Heart right ventricle (tissue), 16 donors: ENCODE measurements at regions of chr5 and their contacts with region 1.

Region 1: GRCh38 chr5:44312374-44312773 is 76.8 kb downstream of the FGF10 start:
- DNase-seq: no peak
- ATAC-seq: no peak
- H3K4me3 ChIP-seq: no peak overlapping the region
- H3K27ac ChIP-seq: no peak overlapping the region
- H3K4me1 ChIP-seq: no peaks in the 10 kb centered on the region
- H3K27me3 ChIP-seq: no peaks in the 10 kb centered on the region
- CTCF ChIP-seq: no peak

Region 2: DNA sequence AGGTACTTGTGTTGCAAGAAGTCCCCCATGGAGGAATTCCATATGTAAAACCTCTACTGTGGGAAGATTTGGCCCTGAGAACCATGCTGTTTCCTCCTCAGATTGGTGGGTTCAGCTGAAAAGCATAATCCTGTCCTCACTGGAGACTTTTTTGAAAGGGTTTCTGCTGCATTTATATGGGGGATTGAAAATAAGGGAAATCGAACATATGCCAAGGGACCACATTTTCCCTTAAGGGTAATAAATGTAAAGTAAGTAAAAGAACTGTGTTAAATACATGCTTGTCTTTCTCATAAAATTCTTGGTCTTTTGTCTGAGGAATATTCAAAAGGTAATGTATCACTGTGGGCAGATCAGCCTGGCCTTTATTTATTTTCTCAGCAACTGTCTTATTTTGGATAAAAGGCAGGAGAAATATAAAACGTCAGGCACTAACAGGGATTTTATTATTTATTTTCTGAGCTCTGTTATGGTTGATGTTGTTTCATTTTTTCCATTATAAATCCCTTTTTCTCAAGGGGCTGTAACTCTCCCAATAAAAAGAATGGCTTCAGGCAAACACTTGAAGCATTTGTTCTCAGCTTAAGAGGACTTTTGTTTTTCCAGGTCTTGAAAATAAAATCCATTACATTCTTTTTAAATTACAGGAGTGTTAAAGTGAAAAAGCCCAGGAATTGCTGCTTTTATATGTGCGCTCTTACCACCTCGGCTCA is 54.6 kb before region 1 on chr5:
- intact Hi-C with region 1: loop called in 1 of 10 experiments (anchors 10 kb)
- DNase-seq: no peak
- ATAC-seq: no peak
- H3K4me3 ChIP-seq: no peak overlapping the region
- H3K27ac ChIP-seq: no peak overlapping the region
- H3K4me1 ChIP-seq: no peaks in the 10 kb centered on the region
- H3K27me3 ChIP-seq: no peaks in the 10 kb centered on the region
- CTCF ChIP-seq: no peak

Region 3: GRCh38 chr5:44345871-44346270 is 33.5 kb after region 1 on chr5:
- intact Hi-C with region 1: no loop called
- DNase-seq: no peak
- ATAC-seq: no peak
- H3K4me3 ChIP-seq: no peak overlapping the region
- H3K27ac ChIP-seq: no peak overlapping the region
- H3K4me1 ChIP-seq: no peaks in the 10 kb centered on the region
- H3K27me3 ChIP-seq: no peaks in the 10 kb centered on the region
- CTCF ChIP-seq: no peak